GM23248 (cell line): ENCODE measurements at regions of chr12 and their contacts with region 1.

Region 1: DNA sequence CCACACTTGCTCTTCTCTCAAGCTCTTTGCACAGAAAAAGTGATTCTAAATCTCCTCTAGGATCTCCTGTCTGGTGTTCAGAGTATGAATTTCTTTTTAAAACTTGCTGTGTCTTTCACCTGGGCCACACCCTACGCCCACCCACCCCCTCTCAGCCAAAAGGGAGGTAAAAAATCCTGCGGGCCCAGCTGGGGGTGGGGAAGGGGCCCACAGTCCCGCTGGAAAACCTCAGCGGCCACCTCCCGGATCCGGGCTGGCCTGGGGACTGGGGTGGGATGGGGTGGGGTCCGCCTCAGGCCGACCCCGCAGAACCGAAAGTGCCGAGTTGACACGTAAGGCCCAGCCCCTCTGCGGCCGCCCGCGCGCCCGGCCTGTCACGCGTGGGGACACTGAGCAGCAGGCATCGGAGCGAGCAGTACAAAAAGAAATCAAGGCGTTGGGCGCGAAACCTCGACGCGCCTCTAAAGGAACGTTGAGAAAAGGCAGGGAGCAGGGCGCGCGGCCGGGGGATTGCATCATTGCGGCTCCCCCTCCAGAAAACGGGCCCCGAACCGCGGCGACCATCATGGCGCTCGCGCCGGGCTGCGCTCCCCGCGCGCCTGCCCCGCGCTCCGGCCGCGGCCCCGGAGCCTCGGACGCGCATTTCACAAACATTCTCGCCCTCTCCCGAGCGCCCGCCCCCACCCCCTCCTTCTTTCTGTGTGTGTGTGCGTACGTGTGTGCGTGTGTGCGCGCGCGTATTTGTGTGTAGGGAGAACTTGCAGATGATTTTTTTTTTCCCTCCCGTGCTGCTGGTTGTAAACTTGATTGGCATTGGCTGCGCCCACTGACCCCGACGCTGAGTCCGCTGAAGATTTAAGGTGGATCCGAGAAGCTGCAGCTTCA is 7.7 kb downstream of the CDKN1B start:
- DNase-seq: peak; percentile 99
- H3K4me3 ChIP-seq: peak overlapping the region; percentile 90
- H3K27ac ChIP-seq: peak overlapping the region; percentile 94
- H3K4me1 ChIP-seq: peaks cover 34% of the 10 kb centered on the region
- H3K27me3 ChIP-seq: no peaks in the 10 kb centered on the region

Region 2: GRCh38 chr12:12081836-12082497 is 642.9 kb before region 1 on chr12:
- in situ Hi-C with region 1: loop called (anchors 25 kb)
- DNase-seq: peak; percentile 73
- H3K4me3 ChIP-seq: no peak overlapping the region
- H3K27ac ChIP-seq: peak overlapping the region; percentile 18; the same call in 1 of the 2 replicates
- H3K4me1 ChIP-seq: peaks cover 10% of the 10 kb centered on the region; the same call in 1 of the 2 replicates
- H3K27me3 ChIP-seq: no peaks in the 10 kb centered on the region